Activated CD8-positive, alpha-beta T cell treated with anti-CD3 and anti-CD28 coated beads for 36 hours (primary cell): ENCODE measurements at regions of chr12 and their contacts with region 1.

Region 1: GRCh38 chr12:69157023-69157655 is 82.2 kb upstream of the CPSF6 start:
- DNase-seq: peak; percentile 95
- ATAC-seq: peak; percentile 93
- H3K4me3 Mint-ChIP-seq: peak overlapping the region; percentile 50
- H3K27ac Mint-ChIP-seq: peak overlapping the region; percentile 58
- H3K4me1 Mint-ChIP-seq: peaks cover 52% of the 10 kb centered on the region
- H3K27me3 Mint-ChIP-seq: peaks cover 1% of the 10 kb centered on the region
- CTCF ChIP-seq: peak; percentile 88

Region 2: GRCh38 chr12:68610370-68611093 is 546.6 kb before region 1 on chr12 and contains the start of gene RAP1B:
- CTCF ChIA-PET with region 1: no interaction called
- POLR2A ChIA-PET with region 1: no interaction called
- intact Hi-C with region 1: no loop called
- DNase-seq: peak; percentile 87
- ATAC-seq: peak; percentile 83
- H3K4me3 Mint-ChIP-seq: peak within 1 kb of the TSS; percentile 98
- H3K27ac Mint-ChIP-seq: peak within 1 kb of the TSS; percentile 99
- H3K4me1 Mint-ChIP-seq: peaks cover 34% of the 10 kb centered on the region
- H3K27me3 Mint-ChIP-seq: no peaks in the 10 kb centered on the region
- CTCF ChIP-seq: no peak
- total RNA-seq, gene RAP1B: 187 to 192 TPM

Region 3: GRCh38 chr12:69168828-69169227 is 11.7 kb after region 1 on chr12:
- CTCF ChIA-PET with region 1: interaction called, 36 read pairs
- POLR2A ChIA-PET with region 1: no interaction called
- intact Hi-C with region 1: no loop called
- DNase-seq: no peak
- ATAC-seq: no peak
- H3K4me3 Mint-ChIP-seq: no peak overlapping the region
- H3K27ac Mint-ChIP-seq: no peak overlapping the region
- H3K4me1 Mint-ChIP-seq: no peaks in the 10 kb centered on the region
- H3K27me3 Mint-ChIP-seq: no peaks in the 10 kb centered on the region
- CTCF ChIP-seq: no peak

Region 4: DNA sequence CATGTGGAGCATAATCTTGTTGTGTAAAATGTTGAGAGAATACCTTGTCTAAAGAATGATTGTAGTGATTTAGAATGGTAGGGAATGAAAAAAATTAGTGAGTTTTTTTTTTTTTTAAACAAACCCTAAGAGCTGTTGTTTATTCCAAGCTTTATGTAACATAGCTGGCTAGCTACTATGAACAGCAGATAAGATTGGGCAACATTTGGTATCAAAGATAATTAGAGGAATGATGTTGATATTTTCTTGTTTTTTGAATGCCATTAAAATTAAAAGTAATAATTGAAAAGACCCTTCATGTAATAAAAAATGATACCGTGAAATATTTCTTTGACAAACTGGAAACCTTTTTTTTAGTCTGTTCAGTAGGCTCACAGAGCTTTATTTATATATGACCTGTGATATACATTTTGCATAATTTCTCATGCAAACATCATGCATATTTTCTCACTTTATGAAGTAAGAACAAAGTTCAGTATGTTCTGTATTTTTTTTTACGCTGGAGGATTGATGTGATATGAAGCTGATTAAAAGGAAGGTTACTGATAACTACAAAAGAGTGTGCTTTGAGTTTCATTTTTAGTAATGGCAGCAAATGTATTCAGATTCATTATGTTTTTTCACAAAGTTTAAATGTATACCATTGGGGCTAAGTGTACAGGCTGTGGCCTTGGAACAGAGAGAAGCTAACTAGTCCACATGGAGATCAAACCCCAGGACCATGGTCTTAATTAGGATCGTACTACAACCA is 90.3 kb after region 1 on chr12:
- CTCF ChIA-PET with region 1: interaction called, 50 read pairs
- POLR2A ChIA-PET with region 1: interaction called, 3 read pairs
- intact Hi-C with region 1: loop called (anchors 5 kb)
- DNase-seq: no peak
- ATAC-seq: no peak
- H3K4me3 Mint-ChIP-seq: peak overlapping the region; percentile 17
- H3K27ac Mint-ChIP-seq: peak overlapping the region; percentile 77
- H3K4me1 Mint-ChIP-seq: peaks cover 75% of the 10 kb centered on the region
- H3K27me3 Mint-ChIP-seq: no peaks in the 10 kb centered on the region
- CTCF ChIP-seq: no peak

Region 5: DNA sequence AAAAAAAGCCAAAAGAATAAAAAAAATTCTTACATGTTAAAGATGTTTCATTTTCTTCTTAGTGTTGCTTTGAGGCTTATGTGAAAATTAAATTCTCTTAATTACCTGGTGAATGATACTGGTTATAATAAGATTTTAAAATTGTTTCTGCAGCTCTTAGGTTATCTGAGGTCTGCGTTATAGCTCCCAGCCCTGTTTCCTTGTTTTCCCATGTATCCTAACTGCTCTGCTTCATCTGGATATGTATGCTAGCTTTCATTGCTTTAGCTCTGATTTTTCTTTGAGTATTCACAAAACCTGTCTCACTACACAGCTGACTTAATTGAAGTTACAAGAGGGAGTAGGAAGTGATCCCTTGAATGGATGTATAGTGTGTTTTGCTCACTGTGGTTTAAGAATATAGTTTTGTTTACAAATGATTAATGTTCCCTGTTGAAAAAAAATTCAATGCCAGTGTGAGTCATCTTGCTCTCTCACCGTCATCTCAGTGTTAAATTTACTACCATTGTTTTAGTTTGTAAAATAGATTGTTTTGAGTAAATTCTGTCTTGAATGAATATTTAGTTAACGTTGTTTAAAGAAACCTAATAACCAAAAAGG is 109.0 kb after region 1 on chr12:
- CTCF ChIA-PET with region 1: interaction called, 19 read pairs
- POLR2A ChIA-PET with region 1: interaction called, 3 read pairs
- intact Hi-C with region 1: no loop called
- DNase-seq: no peak
- ATAC-seq: no peak
- H3K4me3 Mint-ChIP-seq: no peak overlapping the region
- H3K27ac Mint-ChIP-seq: no peak overlapping the region
- H3K4me1 Mint-ChIP-seq: peaks cover 16% of the 10 kb centered on the region
- H3K27me3 Mint-ChIP-seq: no peaks in the 10 kb centered on the region
- CTCF ChIP-seq: no peak

Region 6: DNA sequence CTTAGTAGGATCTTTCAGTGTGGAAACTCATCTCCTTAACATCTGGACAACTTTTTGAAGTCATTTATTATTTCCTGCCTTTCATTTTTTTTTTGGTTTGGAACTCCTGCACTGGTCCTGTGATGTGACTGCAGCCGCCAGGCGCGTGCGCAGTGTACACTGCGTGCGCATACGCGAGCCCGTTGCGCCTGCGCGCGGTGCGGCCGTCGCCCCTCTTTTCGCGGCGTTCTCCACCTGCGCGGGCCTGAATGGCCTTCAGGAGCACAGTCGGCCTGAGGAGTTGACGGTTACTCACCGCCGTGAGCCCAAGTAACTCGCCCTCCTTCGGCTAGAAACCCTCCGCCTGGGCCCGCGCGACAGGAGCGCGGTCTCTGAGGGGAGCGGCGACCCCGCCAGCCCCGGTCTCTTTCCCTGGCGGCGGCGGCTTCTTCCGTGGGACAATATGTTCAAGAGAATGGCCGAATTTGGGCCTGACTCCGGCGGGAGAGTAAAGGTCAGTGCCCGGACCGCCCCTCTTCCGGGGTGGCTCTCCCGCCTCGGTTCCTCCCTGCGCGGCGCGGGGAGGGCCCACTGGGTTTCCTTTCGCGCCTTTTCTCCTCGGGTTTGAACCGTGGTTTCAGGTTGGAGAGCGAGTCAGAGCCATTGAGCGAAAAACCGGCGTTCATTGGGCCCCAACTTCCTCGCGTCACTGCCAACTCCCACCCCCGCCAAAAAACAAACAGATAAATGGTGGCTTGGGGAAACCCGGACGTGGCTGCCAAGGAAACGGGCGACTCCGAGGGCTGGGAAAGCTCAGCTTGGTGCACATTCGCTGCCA is 202.6 kb after region 1 on chr12 and contains the start of gene YEATS4:
- CTCF ChIA-PET with region 1: interaction called, 5 read pairs
- POLR2A ChIA-PET with region 1: interaction called, 7 read pairs
- intact Hi-C with region 1: loop called (anchors 10 kb)
- DNase-seq: peak; percentile 95
- ATAC-seq: peak; percentile 82
- H3K4me3 Mint-ChIP-seq: peak within 1 kb of the TSS; percentile 77
- H3K27ac Mint-ChIP-seq: peak within 1 kb of the TSS; percentile 96
- H3K4me1 Mint-ChIP-seq: peaks cover 23% of the 10 kb centered on the region
- H3K27me3 Mint-ChIP-seq: peaks cover under 1% of the 10 kb centered on the region
- CTCF ChIP-seq: no peak
- total RNA-seq, gene YEATS4: 54.0 to 60.9 TPM